Activated naive CD8-positive, alpha-beta T cell treated with anti-CD3 and anti-CD28 coated beads, Interleukin-2, amount 10 ng/mL, durations not matched to agents 7 days and 5 days (primary cell): ENCODE measurements at regions of chr15 and their contacts with region 1.

Region 1: GRCh38 chr15:50119063-50120040 is at the start of gene ATP8B4:
- DNase-seq: no peak
- ATAC-seq: peak; percentile 60
- H3K4me3 Mint-ChIP-seq: peak within 1 kb of the TSS; percentile 92
- H3K27ac Mint-ChIP-seq: peak within 1 kb of the TSS; percentile 92
- H3K4me1 Mint-ChIP-seq: peaks cover 42% of the 10 kb centered on the region
- H3K27me3 Mint-ChIP-seq: no peaks in the 10 kb centered on the region
- total RNA-seq, gene ATP8B4: 25.0 to 30.3 TPM

Region 2: DNA sequence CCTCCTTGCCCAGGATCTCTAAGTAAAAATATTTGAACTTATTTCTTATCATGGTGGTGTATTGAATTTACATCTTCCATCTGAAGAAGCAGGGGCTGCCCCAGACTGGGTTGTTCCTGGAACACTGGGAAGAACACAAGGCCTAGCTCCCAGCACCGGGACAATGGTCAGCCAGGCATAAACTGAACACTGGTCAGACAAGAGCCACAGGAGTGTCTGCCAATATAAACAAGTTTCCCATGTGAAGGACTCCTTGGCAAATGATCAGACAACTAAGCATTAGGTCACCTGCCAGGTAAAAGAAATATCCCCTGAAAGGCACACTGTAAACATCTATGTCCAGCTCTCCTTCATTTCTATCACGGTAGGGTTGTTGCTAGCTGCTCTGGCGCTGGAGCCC is 172.7 kb before region 1 on chr15:
- POLR2A ChIA-PET with region 1: no interaction called
- DNase-seq: no peak
- ATAC-seq: no peak
- H3K4me3 Mint-ChIP-seq: no peak overlapping the region
- H3K27ac Mint-ChIP-seq: no peak overlapping the region
- H3K4me1 Mint-ChIP-seq: peaks cover 2% of the 10 kb centered on the region
- H3K27me3 Mint-ChIP-seq: no peaks in the 10 kb centered on the region

Region 3: GRCh38 chr15:50107591-50108408 is 11.6 kb before region 1 on chr15:
- POLR2A ChIA-PET with region 1: interaction called, 26 read pairs
- DNase-seq: peak; percentile 45
- ATAC-seq: peak; percentile 73
- H3K4me3 Mint-ChIP-seq: peak overlapping the region; percentile 71
- H3K27ac Mint-ChIP-seq: peak overlapping the region; percentile 91
- H3K4me1 Mint-ChIP-seq: peaks cover 76% of the 10 kb centered on the region
- H3K27me3 Mint-ChIP-seq: no peaks in the 10 kb centered on the region

Region 4: GRCh38 chr15:50134520-50135024 is 15.2 kb after region 1 on chr15:
- POLR2A ChIA-PET with region 1: interaction called, 27 read pairs
- DNase-seq: no peak
- ATAC-seq: peak; percentile 43
- H3K4me3 Mint-ChIP-seq: peak overlapping the region; percentile 42
- H3K27ac Mint-ChIP-seq: peak overlapping the region; percentile 62
- H3K4me1 Mint-ChIP-seq: peaks cover 33% of the 10 kb centered on the region
- H3K27me3 Mint-ChIP-seq: no peaks in the 10 kb centered on the region